ENCODE measurements at regions of chr14 and their contacts with region 1.

Region 1: DNA sequence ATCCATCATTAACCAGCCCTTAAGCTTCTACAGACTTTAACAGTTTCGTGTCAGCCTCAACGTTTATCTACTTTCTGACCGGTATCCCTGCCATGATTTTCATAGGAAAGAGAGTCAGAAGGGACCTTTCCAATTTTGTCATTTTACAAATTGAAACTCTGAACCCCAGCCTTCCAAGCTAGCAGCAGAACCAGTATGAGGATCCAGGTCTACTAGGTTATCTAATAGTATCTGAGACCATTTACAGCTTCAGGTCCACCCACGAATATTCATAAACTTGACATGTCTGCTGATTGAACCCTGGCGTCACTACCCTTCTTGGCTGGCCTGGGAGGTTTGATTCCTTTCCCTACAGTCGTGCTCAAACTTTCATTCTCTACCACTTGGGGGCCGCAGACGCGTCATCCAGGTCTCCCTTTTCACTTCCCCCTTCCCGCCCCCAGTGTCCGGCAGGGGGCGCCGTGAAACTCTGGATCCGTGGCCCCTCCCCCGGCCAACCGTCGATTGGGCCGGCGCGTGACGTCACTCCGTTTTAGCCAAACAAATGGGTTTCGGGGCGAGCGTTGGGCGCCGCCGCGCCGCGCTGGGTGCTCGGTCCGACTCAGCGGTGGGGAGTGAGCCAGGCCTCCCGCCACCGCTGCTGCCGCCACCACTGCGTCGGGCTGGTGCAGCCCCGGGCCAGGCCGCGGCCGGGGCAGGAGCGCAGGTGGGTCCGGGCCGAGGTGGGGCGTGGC is at the start of gene FBXO34:
- DNase-seq: peak; percentile 100
- H3K4me3 Mint-ChIP-seq: peak within 1 kb of the TSS; percentile 91
- H3K27ac Mint-ChIP-seq: peak within 1 kb of the TSS; percentile 96
- H3K4me1 Mint-ChIP-seq: peaks cover 32% of the 10 kb centered on the region
- H3K27me3 Mint-ChIP-seq: no peaks in the 10 kb centered on the region
- total RNA-seq, gene FBXO34: 25.3 and 26.2 TPM in 2 replicates

Region 2: DNA sequence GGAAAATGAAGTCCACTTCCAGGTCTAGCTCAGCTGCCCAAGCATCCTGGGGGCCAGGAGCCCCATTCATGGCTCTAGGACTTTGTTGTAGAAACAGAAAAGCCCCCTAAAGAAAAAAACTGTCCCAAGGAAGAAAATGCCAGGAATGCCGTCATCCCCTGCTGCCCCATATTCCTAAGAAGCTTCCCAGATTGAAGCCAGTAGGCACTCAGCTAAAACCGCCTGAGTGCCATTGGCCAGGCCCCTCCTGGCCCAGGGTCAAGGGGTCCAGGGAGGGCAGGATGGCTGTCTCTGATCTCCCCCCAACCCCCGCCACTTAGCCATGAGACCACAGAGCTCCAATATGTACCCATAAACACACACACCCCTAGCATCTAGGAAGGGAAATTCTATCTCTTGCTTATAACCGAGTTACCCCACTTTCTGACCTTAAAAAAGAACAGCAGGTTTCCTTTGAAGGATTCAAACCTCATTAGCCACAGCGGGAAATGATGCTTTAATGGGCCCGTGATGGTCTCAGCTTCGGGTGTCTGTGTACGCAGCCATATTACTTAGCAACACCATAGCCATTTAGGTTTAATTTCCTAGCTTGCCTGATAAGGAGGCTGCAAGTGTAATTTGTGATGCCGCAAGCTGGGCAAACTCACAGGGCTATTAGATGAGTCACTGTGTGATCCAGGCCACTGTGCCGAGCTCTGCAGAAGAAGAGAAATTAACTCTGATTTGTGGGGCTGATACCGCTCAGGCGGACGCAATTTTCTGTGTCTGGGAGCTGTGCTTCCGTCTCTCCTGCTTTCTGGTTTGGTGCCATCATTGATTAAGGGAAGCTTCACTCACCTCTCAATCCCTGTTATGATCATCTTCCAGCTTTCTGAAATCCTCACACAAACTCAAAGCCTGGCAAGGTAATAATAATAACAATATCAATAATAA is 452.5 kb before region 1 on chr14:
- intact Hi-C with region 1: no loop called
- DNase-seq: no peak
- H3K4me3 Mint-ChIP-seq: no peak overlapping the region
- H3K27ac Mint-ChIP-seq: no peak overlapping the region
- H3K4me1 Mint-ChIP-seq: no peaks in the 10 kb centered on the region
- H3K27me3 Mint-ChIP-seq: peaks cover 20% of the 10 kb centered on the region

Region 3: DNA sequence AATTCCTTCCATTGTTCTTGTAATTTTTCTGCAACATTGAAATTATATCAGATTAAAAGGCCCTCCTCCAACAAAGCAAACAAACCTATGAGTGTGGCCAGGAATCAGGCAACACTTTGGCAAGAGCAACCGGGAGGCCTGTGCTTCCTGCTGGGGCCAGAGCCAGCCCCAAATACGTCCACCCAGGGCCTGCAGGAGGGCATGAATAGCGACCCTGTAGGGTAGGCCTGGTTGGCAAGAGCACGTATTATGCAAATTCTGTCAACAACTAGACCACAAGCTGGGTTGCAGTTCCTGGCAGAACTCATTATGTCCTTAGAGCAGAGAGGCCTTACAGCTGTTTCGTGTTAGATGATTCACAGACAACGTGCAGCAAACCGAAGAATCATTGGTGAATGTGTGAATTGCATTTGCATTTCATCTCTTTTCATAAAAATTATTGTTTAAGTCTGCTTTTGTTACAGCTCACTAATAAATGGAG is 168.8 kb before region 1 on chr14:
- intact Hi-C with region 1: loop called (anchors 10 kb)
- DNase-seq: peak; percentile 84
- H3K4me3 Mint-ChIP-seq: peak overlapping the region; percentile 73
- H3K27ac Mint-ChIP-seq: peak overlapping the region; percentile 94
- H3K4me1 Mint-ChIP-seq: peaks cover 46% of the 10 kb centered on the region
- H3K27me3 Mint-ChIP-seq: no peaks in the 10 kb centered on the region

Region 4: GRCh38 chr14:55212634-55213033 is 58.4 kb before region 1 on chr14:
- intact Hi-C with region 1: loop called (anchors 5 kb)
- DNase-seq: no peak
- H3K4me3 Mint-ChIP-seq: no peak overlapping the region
- H3K27ac Mint-ChIP-seq: no peak overlapping the region
- H3K4me1 Mint-ChIP-seq: peaks cover 2% of the 10 kb centered on the region
- H3K27me3 Mint-ChIP-seq: peaks cover 3% of the 10 kb centered on the region

Region 5: GRCh38 chr14:55354500-55354899 is 83.5 kb after region 1 on chr14:
- intact Hi-C with region 1: loop called (anchors 1 kb)
- DNase-seq: peak; percentile 89
- H3K4me3 Mint-ChIP-seq: peak overlapping the region; percentile 70
- H3K27ac Mint-ChIP-seq: peak overlapping the region; percentile 93
- H3K4me1 Mint-ChIP-seq: peaks cover 33% of the 10 kb centered on the region
- H3K27me3 Mint-ChIP-seq: no peaks in the 10 kb centered on the region

Region 6: DNA sequence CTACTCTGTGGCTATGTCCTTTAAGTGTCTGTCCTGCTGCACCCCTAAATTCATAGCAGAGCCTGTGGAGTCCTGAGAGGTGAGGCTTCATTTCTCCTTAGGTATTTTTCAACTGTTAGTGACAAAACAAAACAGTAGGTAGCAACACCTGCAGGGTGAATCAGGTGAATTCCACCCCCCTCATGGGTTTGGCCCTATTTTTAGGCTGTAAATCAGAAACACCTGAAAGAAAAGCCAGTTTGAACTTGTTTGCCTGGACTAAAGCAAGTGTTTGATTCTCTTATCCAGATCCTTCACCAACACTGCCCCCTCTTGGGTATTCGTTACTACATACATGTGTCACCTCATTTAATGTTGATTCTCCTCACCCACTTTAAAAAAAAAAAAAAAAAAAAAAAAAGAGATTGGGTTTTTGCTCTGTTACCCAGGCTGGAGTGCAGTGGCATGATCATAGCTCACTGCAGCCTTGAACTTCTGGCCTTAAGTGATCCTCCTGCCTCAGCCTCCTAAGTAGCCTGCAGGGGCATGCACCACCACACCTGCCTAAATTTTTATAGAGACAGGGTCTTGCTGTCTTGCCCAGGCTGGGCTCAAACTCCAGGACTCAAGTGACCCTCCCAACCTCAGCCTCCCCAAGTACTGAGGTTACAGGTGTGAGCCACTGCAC is 159.2 kb after region 1 on chr14:
- intact Hi-C with region 1: loop called (anchors 1 kb)
- DNase-seq: peak; percentile 86
- H3K4me3 Mint-ChIP-seq: no peak overlapping the region
- H3K27ac Mint-ChIP-seq: no peak overlapping the region
- H3K4me1 Mint-ChIP-seq: peaks cover 24% of the 10 kb centered on the region
- H3K27me3 Mint-ChIP-seq: no peaks in the 10 kb centered on the region

Measured in activated CD4-positive, alpha-beta T cell treated with anti-CD3 and anti-CD28 coated beads, Interleukin-2, amount 10 ng/mL, durations not matched to agents 24 days and 14 days (primary cell).